Posterior vena cava (tissue), 2 donors: ENCODE measurements at regions of chr1 and their contacts with region 1.

Region 1: GRCh38 chr1:241658081-241658793 is 6.2 kb downstream of the WDR64 start:
- DNase-seq: no peak

Region 2: DNA sequence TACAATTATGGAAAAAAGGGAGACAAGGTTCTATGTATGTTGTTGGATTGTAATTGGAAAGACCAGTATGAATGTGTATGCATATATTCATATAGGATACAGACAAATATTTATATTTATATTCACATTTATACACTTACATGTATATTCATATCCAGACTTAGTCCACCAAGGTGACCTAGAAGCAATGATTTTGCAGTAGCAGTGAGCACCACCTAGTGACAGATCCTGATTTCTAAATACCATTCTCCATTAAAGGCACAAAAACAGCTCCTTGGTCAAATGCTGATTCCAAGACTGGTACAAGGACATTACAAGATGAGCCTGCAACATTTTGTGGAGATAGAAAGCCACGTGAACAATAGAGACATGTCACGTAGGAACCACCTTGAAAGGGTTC is 1751.0 kb after region 1 on chr1:
- intact Hi-C with region 1: loop called in 1 of 2 experiments (anchors 10 kb)
- DNase-seq: no peak